Mammary epithelial cell (primary cell): ENCODE measurements at regions of chr4 and their contacts with region 1.

Region 1: DNA sequence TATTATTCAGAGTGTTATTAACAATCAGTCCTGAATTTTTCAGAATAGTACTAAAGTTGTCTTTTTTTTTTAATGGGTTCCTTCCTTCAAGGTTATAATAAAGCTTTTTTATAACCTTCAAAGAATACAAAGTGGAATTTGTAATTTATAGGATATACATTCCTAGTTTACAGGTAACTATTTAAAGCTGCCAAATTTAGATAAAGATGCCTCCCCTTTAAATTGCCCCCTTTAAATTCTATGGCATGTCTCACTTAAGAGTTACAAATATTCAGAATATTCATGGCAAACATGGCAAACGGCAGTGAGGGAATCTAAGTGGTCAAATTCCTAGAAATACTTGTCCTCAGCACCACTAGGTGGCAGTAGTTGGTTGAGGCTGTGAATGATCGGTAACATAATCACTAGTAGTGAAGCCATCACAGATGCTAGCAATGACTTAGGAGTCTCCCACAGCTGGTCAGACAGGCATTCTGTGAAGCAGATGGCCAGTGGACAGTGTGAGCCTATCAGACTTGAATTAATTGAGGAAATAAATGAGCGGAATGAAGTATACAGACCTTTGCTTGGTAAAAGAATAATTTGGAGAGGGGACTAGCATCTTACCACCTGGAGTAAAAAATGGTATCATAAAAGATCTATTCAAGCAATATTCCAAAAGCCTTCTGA is 86.4 kb downstream of the CBR4 start:
- DNase-seq: peak; percentile 42
- H3K4me3 ChIP-seq: no peak overlapping the region
- H3K27ac ChIP-seq: no peak overlapping the region
- H3K4me1 ChIP-seq: no peaks in the 10 kb centered on the region
- H3K27me3 ChIP-seq: no peaks in the 10 kb centered on the region
- CTCF ChIP-seq: peak; percentile 58 to 71

Region 2: DNA sequence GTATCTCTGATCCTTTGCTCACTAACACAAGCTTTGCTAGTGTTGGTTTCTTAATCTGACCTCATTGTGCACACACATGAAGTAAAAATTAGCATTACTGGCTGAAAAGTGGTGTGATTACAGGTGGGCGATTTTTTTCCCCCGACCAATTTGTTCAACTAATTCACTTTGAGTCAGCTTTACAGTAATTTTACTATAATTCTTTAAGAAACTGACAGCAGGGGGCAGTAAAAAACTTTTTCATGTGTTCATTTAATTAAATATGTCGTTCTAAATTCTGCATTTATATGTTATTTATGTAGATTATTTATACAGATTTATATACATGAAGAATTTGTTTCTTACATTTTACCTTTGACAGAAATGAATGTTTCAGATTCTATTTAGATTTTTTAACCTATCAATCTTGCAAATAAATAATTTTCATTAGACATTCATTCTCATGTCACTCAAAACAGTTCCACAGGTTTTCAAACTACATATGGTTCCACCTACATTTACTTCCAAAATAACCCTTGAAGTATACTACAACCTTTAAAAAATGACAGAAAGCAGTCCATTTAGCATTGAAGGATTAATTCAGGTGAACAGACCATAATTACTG is 409.3 kb before region 1 on chr4:
- CTCF ChIA-PET with region 1: interaction called, 5 read pairs
- dilution Hi-C with region 1: no loop called
- in situ Hi-C with region 1: no loop called
- intact Hi-C with region 1: loop called (anchors 5 kb)
- DNase-seq: peak; percentile 24
- H3K4me3 ChIP-seq: no peak overlapping the region
- H3K27ac ChIP-seq: no peak overlapping the region
- H3K4me1 ChIP-seq: no peaks in the 10 kb centered on the region
- H3K27me3 ChIP-seq: no peaks in the 10 kb centered on the region
- CTCF ChIP-seq: peak; percentile 31 to 36

Region 3: DNA sequence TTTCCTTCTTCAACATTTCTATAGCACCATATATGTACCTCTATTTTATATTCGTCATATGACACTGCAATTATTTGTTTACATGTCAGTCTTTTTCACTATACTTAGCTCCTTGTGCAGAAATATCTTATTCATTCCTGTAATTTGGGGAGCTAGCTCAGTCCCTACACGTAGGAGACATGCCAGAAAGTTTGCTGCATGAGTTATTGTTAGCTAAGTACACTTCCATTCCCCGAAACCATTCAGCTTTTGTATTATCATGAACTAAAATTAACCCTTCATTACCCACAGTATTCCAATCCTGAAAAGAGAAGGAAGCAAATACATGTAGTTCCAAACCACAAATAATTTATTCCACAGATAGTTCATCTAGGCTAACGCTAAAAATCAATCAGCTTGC is 76.1 kb after region 1 on chr4:
- CTCF ChIA-PET with region 1: no interaction called
- dilution Hi-C with region 1: loop called (anchors 5 kb)
- in situ Hi-C with region 1: loop called in 1 of 2 experiments (anchors 10 kb)
- intact Hi-C with region 1: loop called (anchors 1 kb)
- DNase-seq: no peak
- H3K4me3 ChIP-seq: no peak overlapping the region
- H3K27ac ChIP-seq: no peak overlapping the region
- H3K4me1 ChIP-seq: no peaks in the 10 kb centered on the region
- H3K27me3 ChIP-seq: no peaks in the 10 kb centered on the region
- CTCF ChIP-seq: no peak

Region 4: GRCh38 chr4:169485791-169486742 is 562.4 kb after region 1 on chr4:
- CTCF ChIA-PET with region 1: no interaction called
- dilution Hi-C with region 1: no loop called
- in situ Hi-C with region 1: loop called (anchors 10 kb)
- intact Hi-C with region 1: loop called (anchors 1 kb)
- DNase-seq: peak; percentile 50
- H3K4me3 ChIP-seq: no peak overlapping the region
- H3K27ac ChIP-seq: peak overlapping the region; percentile 15
- H3K4me1 ChIP-seq: peaks cover 4% of the 10 kb centered on the region
- H3K27me3 ChIP-seq: no peaks in the 10 kb centered on the region
- CTCF ChIP-seq: peak; percentile 43 to 54

Region 5: DNA sequence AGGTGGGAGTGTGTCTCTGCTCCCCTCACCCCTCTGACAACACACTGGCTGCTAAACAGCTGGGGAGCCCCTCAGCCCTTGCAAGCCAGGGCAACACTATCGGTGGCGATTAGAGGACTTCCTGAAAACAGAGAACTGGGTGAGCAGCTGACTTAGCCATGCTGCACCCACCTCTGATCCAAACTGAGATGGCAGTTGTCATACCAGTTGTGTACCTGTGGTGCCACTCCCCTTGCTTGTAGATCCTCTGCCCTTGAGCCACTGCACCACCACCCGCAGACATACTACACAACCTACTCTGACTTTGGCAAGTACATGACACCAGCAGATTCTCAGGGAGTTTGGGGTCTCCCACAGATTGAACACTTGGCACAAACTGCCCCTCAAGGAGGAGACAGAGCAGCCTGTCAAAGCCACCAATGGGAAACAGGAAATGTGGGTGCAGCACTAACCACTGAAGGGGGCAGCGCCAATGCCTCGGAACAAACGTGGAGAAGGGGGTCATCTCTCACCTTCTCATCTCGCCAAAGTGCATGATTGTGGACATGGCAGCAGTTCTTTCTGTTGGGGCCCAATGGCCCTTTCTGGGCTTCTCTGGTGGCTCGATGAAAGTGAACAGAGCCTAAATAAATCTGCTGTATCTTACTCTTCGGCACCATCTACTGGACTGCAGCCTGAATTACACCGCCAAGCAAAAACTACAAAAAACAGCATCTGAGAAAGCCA is 568.9 kb after region 1 on chr4:
- CTCF ChIA-PET with region 1: no interaction called
- dilution Hi-C with region 1: no loop called
- in situ Hi-C with region 1: loop called (anchors 10 kb)
- intact Hi-C with region 1: loop called (anchors 1 kb)
- DNase-seq: peak; percentile 21
- H3K4me3 ChIP-seq: no peak overlapping the region
- H3K27ac ChIP-seq: no peak overlapping the region
- H3K4me1 ChIP-seq: no peaks in the 10 kb centered on the region
- H3K27me3 ChIP-seq: no peaks in the 10 kb centered on the region
- CTCF ChIP-seq: peak; percentile 80 to 81

Region 6: DNA sequence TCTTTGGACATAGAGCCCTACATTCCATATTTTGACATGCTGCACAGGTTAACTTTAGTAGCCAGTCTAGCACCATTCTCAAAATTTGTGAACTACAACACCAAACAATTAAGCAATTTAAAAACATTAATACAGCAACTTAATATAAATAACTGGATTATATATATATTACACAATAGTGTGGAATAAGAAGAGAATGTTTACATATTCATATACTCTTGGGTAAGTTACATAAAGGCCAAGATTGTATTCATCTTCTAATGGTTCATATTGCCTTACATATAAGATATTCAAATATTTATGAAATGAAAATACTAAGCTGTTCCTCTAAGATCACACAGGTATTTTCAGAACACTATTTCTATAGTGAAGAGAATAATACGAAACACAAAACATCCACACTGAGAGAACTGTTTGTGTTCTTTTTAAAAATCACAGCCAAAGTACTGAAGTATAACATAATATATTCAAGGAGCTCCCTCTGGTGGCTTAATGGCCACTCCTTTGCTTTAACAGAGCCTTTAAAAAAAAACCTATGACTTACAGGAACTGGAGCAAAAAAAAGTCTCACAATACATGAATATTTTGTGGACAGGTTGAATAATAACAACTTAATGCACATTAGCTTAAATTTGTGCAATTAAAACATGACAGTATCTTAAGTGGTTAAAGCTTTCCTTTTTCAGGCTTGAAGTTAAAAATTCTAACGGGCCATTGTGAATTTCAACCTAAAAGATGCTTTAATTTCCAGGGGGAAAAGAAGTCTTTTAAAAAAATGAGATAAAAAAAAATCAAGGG is 642.6 kb after region 1 on chr4:
- CTCF ChIA-PET with region 1: no interaction called
- dilution Hi-C with region 1: no loop called
- in situ Hi-C with region 1: no loop called
- intact Hi-C with region 1: loop called (anchors 5 kb)
- DNase-seq: peak; percentile 40
- H3K4me3 ChIP-seq: no peak overlapping the region
- H3K27ac ChIP-seq: no peak overlapping the region
- H3K4me1 ChIP-seq: peaks cover 2% of the 10 kb centered on the region
- H3K27me3 ChIP-seq: no peaks in the 10 kb centered on the region
- CTCF ChIP-seq: peak; percentile 66 to 70